ENCODE measurements at regions of chr19 and their contacts with region 1.

Region 1: DNA sequence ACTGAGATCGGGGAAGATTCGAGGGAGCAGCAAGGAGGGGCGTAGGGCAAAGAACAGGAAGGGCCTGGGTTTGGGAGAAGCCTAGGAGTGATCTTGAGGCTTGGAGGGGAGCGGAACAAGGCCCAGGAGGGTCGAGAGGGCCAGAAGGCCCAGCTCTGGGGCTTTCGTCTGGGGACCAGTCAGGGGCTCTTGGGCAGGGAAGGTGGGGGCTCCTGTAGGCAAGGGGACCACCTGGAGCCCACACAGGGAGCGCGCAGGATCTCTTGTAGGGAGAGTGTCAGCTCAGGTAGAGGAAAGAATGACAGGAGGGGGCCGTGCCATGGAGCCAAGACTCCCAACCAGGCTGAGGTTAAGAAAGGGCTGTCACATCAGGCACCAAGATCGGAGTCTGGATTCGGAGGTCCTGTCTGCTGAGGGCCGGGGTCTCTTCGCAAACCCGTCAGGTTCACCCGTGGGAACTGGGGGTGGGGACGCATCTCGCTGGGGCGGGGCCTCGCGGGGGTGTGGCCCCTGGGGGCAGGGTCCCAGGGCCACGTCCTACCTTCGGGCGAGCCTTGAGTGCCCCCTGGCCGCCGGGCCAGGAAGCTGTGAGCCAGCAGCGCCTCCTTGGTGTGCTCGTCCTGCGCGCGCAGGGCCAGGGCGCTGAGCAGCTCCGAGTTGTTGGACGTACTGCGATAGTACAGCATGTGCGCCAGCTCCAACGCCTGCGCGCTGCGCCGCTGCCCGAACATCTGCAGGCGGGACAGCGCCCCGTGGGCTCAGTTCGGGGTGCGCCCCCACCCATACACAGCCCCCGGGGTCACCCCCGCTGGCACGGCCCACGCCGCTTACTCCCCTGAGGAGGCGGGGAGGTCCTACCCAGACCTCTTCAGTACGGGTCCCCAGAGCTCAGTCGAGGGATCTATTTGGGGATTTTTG is 8.4 kb downstream of the EMP3 start:
- DNase-seq: peak; percentile 90 to 97 (median 94)
- ATAC-seq: peak; percentile 64 to 66 (median 65)
- H3K4me3 ChIP-seq: peak overlapping the region; percentile 85 to 94
- H3K4me3 Mint-ChIP-seq: peak overlapping the region; percentile 91 to 96 (median 96)
- H3K27ac ChIP-seq: peak overlapping the region; percentile 95
- H3K27ac Mint-ChIP-seq: peak overlapping the region; percentile 95 to 99
- H3K4me1 ChIP-seq: peaks cover 23 to 57% of the 10 kb centered on the region in 2 experiments
- H3K4me1 Mint-ChIP-seq: peaks cover 46 to 57% (median 57%) of the 10 kb centered on the region in 3 donors
- H3K27me3 ChIP-seq: no peaks in the 10 kb centered on the region
- H3K27me3 Mint-ChIP-seq: no peaks in the 10 kb centered on the region

Region 2: GRCh38 chr19:47348819-47349795 is 984.6 kb before region 1 on chr19 and contains the start of gene DHX34:
- CTCF ChIA-PET with region 1: no interaction called
- POLR2A ChIA-PET with region 1: interaction called in 1 of 2 experiments, 12 read pairs
- DNase-seq: peak; percentile 96 to 100 (median 99)
- ATAC-seq: peak; percentile 95 to 100 (median 97)
- H3K4me3 ChIP-seq: peak within 1 kb of the TSS; percentile 74 to 84
- H3K4me3 Mint-ChIP-seq: peak within 1 kb of the TSS; percentile 96 to 99 (median 99)
- H3K27ac ChIP-seq: peak within 1 kb of the TSS; percentile 40
- H3K27ac Mint-ChIP-seq: peak within 1 kb of the TSS; percentile 89 to 95
- H3K4me1 ChIP-seq: peaks cover 5 to 22% of the 10 kb centered on the region in 2 experiments
- H3K4me1 Mint-ChIP-seq: peaks cover 34 to 39% (median 38%) of the 10 kb centered on the region in 3 donors
- H3K27me3 ChIP-seq: peaks cover 0 to under 1% of the 10 kb centered on the region in 2 experiments
- H3K27me3 Mint-ChIP-seq: no peaks in the 10 kb centered on the region
- total RNA-seq, gene DHX34: 13.4 to 30.7 (median 28.8) TPM

Region 3: GRCh38 chr19:48249502-48250014 is 84.2 kb before region 1 on chr19:
- CTCF ChIA-PET with region 1: interaction called in 1 of 2 experiments, 15 read pairs
- POLR2A ChIA-PET with region 1: no interaction called
- DNase-seq: peak; percentile 55 to 86 (median 70)
- ATAC-seq: peak; percentile 90 to 95 (median 92)
- H3K4me3 ChIP-seq: peak overlapping the region; percentile 61 to 83
- H3K4me3 Mint-ChIP-seq: peak overlapping the region; percentile 86 to 91 (median 91)
- H3K27ac ChIP-seq: peak overlapping the region; percentile 94
- H3K27ac Mint-ChIP-seq: peak overlapping the region; percentile 98 to 99
- H3K4me1 ChIP-seq: peaks cover 33 to 55% of the 10 kb centered on the region in 2 experiments
- H3K4me1 Mint-ChIP-seq: peaks cover 77 to 86% (median 82%) of the 10 kb centered on the region in 3 donors
- H3K27me3 ChIP-seq: no peaks in the 10 kb centered on the region
- H3K27me3 Mint-ChIP-seq: no peaks in the 10 kb centered on the region

Region 4: DNA sequence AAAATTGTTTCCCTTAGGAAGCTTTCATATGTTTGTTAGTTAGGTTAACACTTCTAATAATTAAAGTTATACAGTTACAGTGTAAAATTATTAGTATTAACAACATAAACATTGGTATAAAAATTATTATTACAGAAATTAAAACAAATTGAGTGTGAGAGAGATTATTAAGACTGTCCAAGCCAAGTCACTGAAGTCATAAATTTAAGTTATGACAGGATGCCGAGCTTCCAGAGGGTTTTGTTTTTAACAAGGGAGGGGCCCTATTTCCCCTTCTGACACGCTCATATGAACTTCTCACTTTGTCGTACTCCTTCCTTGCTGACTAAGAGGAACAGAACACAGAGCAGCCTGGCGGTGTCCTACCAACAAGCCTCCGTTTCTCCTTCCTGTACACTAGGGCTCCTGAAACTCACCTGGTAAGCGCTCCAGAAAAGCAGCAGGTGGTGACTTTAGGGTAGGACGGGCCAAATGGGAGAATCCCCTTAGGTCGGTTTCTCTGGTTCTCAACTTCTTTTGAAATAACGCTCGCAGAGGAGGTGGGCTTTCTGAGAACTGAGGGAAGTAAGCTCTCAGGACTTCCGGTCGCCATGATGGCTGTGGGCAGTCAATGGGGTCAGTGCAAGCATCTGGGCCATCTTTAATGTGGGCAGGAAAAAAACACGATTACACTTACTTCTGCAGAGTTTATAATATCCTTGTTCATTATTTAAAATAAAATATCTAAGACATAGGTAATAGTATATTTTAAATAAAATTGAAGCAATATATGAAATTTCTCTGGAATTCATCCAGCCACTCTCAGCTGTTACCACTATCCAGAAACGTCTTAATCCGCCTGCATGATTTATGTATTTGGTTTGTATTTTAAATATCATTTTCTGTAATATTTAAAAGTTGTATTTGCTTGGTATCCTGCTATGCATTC is 78.1 kb before region 1 on chr19 and contains the start of gene CARD8:
- CTCF ChIA-PET with region 1: interaction called in 1 of 2 experiments, 10 read pairs
- POLR2A ChIA-PET with region 1: interaction called, 3 to 13 read pairs
- DNase-seq: peak; percentile 67 to 90 (median 78)
- ATAC-seq: peak; percentile 85 to 88 (median 87)
- H3K4me3 ChIP-seq: peak within 1 kb of the TSS; percentile 63 to 85
- H3K4me3 Mint-ChIP-seq: peak within 1 kb of the TSS; percentile 94 to 99 (median 94)
- H3K27ac ChIP-seq: peak within 1 kb of the TSS; percentile 76
- H3K27ac Mint-ChIP-seq: peak within 1 kb of the TSS; percentile 98 to 99
- H3K4me1 ChIP-seq: peaks cover 23 to 56% of the 10 kb centered on the region in 2 experiments
- H3K4me1 Mint-ChIP-seq: peaks cover 71 to 81% (median 75%) of the 10 kb centered on the region in 3 donors
- H3K27me3 ChIP-seq: no peaks in the 10 kb centered on the region
- H3K27me3 Mint-ChIP-seq: no peaks in the 10 kb centered on the region
- total RNA-seq, gene CARD8: 146 to 224 (median 191) TPM

Region 5: GRCh38 chr19:48321622-48322591 is 11.8 kb before region 1 on chr19:
- CTCF ChIA-PET with region 1: interaction called, 6 to 123 read pairs
- POLR2A ChIA-PET with region 1: interaction called, 5 to 20 read pairs
- DNase-seq: peak; percentile 98 to 100 (median 99)
- ATAC-seq: peak; percentile 70 to 76 (median 72)
- H3K4me3 ChIP-seq: peak overlapping the region; percentile 80 to 96
- H3K4me3 Mint-ChIP-seq: peak overlapping the region; percentile 91 to 96 (median 95)
- H3K27ac ChIP-seq: peak overlapping the region; percentile 100
- H3K27ac Mint-ChIP-seq: peak overlapping the region; percentile 99 to 100
- H3K4me1 ChIP-seq: peaks cover 29 to 62% of the 10 kb centered on the region in 2 experiments
- H3K4me1 Mint-ChIP-seq: peaks cover 60 to 67% (median 63%) of the 10 kb centered on the region in 3 donors
- H3K27me3 ChIP-seq: no peaks in the 10 kb centered on the region
- H3K27me3 Mint-ChIP-seq: no peaks in the 10 kb centered on the region

Region 6: GRCh38 chr19:48363810-48364563 is 30.3 kb after region 1 on chr19 and contains the starts of genes SYNGR4 and TMEM143:
- CTCF ChIA-PET with region 1: interaction called in 1 of 2 experiments, 32 read pairs
- POLR2A ChIA-PET with region 1: interaction called in 1 of 2 experiments, 11 read pairs
- DNase-seq: peak; percentile 95 to 100 (median 98)
- ATAC-seq: peak; percentile 87 to 93 (median 91)
- H3K4me3 ChIP-seq: peak within 1 kb of the TSS; percentile 71 to 81
- H3K4me3 Mint-ChIP-seq: peak within 1 kb of the TSS; percentile 88 to 91 (median 88)
- H3K27ac ChIP-seq: peak within 1 kb of the TSS; percentile 78
- H3K27ac Mint-ChIP-seq: peak within 1 kb of the TSS; percentile 92 to 96
- H3K4me1 ChIP-seq: peaks cover 3 to 20% of the 10 kb centered on the region in 2 experiments
- H3K4me1 Mint-ChIP-seq: peaks cover 12 to 22% (median 15%) of the 10 kb centered on the region in 3 donors
- H3K27me3 ChIP-seq: no peaks in the 10 kb centered on the region
- H3K27me3 Mint-ChIP-seq: no peaks in the 10 kb centered on the region
- total RNA-seq, gene SYNGR4: not detected
- total RNA-seq, gene TMEM143: 14.5 to 33.5 (median 29.0) TPM

Region 7: GRCh38 chr19:48513289-48514122 is 179.8 kb after region 1 on chr19:
- CTCF ChIA-PET with region 1: no interaction called
- POLR2A ChIA-PET with region 1: interaction called in 1 of 2 experiments, 10 read pairs
- DNase-seq: peak; percentile 53 to 86 (median 72)
- ATAC-seq: peak; percentile 73 to 74 (median 73)
- H3K4me3 ChIP-seq: peak overlapping the region; percentile 56 to 88
- H3K4me3 Mint-ChIP-seq: no peak overlapping the region
- H3K27ac ChIP-seq: peak overlapping the region; percentile 56
- H3K27ac Mint-ChIP-seq: no peak overlapping the region
- H3K4me1 ChIP-seq: peaks cover 12 to 42% of the 10 kb centered on the region in 2 experiments
- H3K4me1 Mint-ChIP-seq: peaks cover 13 to 20% (median 16%) of the 10 kb centered on the region in 3 donors
- H3K27me3 ChIP-seq: peaks cover 0 to 8% of the 10 kb centered on the region in 2 experiments
- H3K27me3 Mint-ChIP-seq: no peaks in the 10 kb centered on the region

Measured in T-cell (primary cell).